Psoas muscle (tissue), 8 donors: ENCODE measurements at regions of chr11 and their contacts with region 1.

Region 1: GRCh38 chr11:131511794-131512193 is 141.4 kb downstream of the NTM start:
- DNase-seq: peak in 1 of 2 donors; percentile 50
- ATAC-seq: no peak
- H3K4me3 ChIP-seq: no peak overlapping the region
- H3K27ac ChIP-seq: no peak overlapping the region
- H3K4me1 ChIP-seq: no peaks in the 10 kb centered on the region
- H3K27me3 ChIP-seq: no peaks in the 10 kb centered on the region
- CTCF ChIP-seq: peak; percentile 36

Region 2: DNA sequence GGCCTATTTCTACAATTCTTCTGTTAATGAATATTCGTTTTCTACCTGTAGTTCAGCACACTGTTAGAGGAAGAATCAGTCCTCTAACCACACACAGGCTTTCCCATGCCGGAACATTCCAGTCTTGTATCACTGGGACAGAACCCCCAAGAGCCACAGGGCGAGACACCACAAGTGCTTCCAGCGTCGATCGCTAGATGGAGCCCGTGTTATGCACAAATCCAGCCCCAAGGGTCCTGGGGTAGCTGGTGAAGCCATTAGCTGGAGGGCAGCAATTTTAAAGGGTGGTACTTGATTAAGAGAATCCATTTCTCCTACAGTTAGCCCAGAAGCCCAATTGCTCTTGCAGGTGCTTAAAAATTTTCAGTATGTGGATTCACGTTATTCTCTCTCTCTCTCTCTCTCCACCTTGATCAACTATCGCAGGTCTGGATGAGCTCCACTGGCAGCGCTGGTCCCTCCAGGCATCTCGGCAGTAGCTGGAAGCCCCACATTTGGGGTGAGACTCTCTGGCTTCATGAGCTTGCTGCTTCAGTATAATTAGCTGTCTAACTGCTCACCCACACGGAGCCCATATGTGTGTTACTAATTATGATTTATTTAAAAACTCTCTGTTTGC is 447.3 kb before region 1 on chr11:
- intact Hi-C with region 1: loop called (anchors 5 kb)
- DNase-seq: peak; percentile 28 to 61
- ATAC-seq: peak in 1 of 4 donors; percentile 44
- H3K4me3 ChIP-seq: no peak overlapping the region
- H3K27ac ChIP-seq: no peak overlapping the region
- H3K4me1 ChIP-seq: no peaks in the 10 kb centered on the region
- H3K27me3 ChIP-seq: peaks cover 0 to 18% (median 0%) of the 10 kb centered on the region in 3 donors
- CTCF ChIP-seq: peak; percentile 66

Region 3: DNA sequence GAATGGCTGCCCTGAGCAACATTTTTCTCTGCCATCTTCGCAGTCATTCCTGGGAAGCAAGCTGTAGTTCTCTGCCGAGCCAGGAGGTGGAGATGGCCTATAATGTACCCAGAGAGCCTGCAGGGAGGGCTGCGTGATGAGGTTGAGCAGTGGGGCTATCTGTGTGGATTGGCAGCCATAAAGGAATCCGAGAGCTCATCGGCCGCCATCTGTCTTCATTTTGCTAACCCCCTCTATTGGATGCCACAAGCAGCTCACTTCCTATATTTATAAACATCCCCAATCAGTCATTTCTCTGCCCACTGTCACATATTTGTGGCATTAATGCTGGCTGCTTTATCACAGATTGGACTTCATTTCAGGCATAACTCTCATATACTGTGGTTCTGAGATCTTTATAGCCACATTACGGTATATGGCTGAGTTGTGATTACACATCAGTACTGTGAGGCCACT is 68.2 kb after region 1 on chr11:
- intact Hi-C with region 1: no loop called
- DNase-seq: peak in 1 of 2 donors; percentile 18
- ATAC-seq: no peak
- H3K4me3 ChIP-seq: no peak overlapping the region
- H3K27ac ChIP-seq: no peak overlapping the region
- H3K4me1 ChIP-seq: no peaks in the 10 kb centered on the region
- H3K27me3 ChIP-seq: peaks cover 0 to 6% (median 2%) of the 10 kb centered on the region in 3 donors
- CTCF ChIP-seq: peak; percentile 17